Dendritic cell treated with granulocyte-macrophage colony-stimulating factor and Interleukin-4, amounts not matched to agents 40 ng/mL and 50 ng/mL, for 4 days (primary cell): ENCODE measurements at regions of chr14 and their contacts with region 1.

Region 1: DNA sequence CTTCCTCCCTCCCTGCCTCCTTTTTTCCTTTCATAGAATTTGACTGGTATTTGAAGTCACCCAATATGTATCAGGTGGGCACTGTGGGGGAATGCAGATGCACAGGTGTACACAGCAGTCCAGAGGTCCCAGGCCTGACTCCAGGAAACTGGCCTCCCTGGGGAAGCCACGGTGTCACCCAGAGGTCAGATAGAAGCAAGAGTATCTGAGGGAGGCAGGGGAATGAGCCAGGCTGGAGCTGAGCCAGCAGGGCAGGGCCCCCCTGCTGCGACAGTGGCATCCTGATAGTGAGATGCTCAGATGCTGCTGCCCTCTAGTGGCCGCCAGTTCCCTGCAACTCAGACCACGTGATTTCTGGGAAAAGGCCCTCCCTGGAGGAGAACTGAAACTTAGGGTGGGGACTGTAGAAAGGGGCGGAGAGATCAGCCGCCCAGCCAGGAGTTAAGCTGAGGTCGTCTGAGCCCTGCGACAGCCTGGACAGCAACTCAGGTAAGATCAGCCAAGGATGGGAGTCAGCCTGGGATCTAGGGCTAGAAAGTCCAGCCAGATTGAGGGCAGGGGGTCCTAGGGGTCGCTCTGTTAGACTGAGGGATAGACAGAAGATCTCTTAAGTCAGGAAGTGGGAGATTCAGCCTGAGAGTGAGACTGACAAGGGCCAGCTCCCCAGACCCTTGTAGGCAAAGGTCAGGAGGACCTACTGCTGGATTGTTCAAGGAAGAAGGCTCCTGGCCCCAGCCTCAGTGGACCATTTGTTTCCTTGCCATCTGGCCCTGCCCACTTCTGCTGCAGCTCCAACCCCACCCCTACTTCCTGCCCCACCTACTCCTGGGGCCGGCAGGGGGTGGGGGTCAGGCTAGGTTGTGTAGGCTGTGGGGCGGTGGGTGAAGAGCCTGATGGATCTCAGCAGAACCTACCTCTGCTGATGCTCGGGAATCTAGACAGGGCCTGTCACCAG is at the start of gene IRF9:
- H3K4me3 Mint-ChIP-seq: peak within 1 kb of the TSS; percentile 95
- H3K27ac Mint-ChIP-seq: peak within 1 kb of the TSS; percentile 93
- H3K4me1 Mint-ChIP-seq: peaks cover 66% of the 10 kb centered on the region
- H3K27me3 Mint-ChIP-seq: no peaks in the 10 kb centered on the region

Region 2: DNA sequence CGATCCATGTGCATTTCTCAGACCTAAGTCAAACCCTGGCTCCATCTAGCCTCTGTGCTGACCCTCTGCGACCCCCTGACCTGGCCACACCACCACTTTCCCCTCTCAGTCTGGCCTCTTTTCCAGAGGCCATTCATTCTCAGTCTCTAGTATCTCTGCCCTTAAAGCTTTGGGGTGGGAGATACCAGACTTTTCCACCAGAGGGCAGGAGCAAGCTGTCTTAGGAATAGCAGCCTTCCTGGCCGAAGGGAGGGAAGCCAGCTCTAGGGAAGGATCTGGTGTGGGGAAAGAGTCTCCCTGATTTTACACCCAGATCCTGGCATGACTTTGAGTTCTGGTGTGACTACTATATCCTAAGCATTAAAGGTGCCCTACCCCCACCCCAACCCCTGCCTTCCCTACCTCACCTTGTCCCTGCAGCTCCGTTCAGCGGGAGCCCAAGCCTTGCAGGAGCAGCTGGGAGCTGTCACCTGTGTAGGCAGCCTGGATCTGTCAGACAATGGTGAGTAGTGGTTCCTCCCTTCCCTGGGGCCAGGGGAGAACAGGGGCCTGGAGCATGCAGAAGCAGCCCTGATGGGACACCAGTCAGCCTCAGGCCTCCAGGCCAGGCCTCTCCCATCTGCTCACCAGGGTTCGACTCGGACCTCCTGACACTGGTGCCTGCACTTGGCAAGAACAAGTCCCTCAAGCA is 102.7 kb before region 1 on chr14:
- intact Hi-C with region 1: loop called (anchors 5 kb)
- H3K4me3 Mint-ChIP-seq: no peak overlapping the region
- H3K27ac Mint-ChIP-seq: no peak overlapping the region
- H3K4me1 Mint-ChIP-seq: peaks cover 5% of the 10 kb centered on the region
- H3K27me3 Mint-ChIP-seq: peaks cover 30% of the 10 kb centered on the region

Region 3: GRCh38 chr14:24093901-24094761 is 67.0 kb before region 1 on chr14 and contains the start of gene PCK2:
- intact Hi-C with region 1: loop called (anchors 1 kb)
- H3K4me3 Mint-ChIP-seq: peak within 1 kb of the TSS; percentile 90
- H3K27ac Mint-ChIP-seq: peak within 1 kb of the TSS; percentile 88
- H3K4me1 Mint-ChIP-seq: peaks cover 63% of the 10 kb centered on the region
- H3K27me3 Mint-ChIP-seq: no peaks in the 10 kb centered on the region

Region 4: DNA sequence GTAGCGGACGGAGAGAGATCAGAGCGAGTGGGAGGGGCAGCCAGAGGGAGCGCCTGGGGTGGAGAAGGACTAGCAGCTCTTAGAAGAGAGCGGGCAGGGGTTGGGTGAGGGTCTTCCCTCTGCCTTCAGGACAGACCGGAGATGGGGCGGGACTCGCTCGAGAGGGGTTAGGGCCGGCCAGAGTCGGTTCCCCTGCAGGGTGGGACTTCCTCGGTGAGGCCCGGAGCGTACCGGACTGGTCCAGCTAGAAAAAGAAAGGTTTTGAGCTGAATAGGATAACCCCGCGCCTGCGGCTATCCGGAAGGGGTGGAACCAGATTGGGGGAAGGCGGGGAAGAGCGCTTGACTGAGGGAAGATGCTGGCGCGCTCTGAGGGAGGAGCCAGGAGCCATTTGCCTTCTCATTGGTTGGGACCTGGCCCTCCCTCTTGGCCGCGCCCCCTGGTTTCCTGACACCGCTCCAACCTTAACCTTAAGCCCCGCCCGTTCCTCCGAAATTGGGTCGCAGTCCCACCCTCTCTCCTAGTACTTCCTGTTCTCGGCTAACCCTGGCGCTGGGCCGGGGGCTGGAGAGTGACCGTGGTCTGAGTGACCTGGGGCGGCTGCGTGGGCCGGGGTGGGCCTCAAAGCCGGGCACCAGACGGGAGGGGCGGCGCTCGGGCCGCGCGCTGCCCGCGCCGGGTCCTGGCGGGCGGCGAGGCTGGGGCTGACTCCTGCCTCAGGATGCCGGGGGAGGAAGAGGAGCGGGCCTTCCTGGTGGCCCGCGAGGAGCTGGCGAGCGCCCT is 14.0 kb before region 1 on chr14 and contains the start of gene RNF31:
- intact Hi-C with region 1: loop called (anchors 1 kb)
- H3K4me3 Mint-ChIP-seq: peak within 1 kb of the TSS; percentile 98
- H3K27ac Mint-ChIP-seq: peak within 1 kb of the TSS; percentile 91
- H3K4me1 Mint-ChIP-seq: peaks cover 59% of the 10 kb centered on the region
- H3K27me3 Mint-ChIP-seq: no peaks in the 10 kb centered on the region

Region 5: GRCh38 chr14:24195191-24196070 is 34.3 kb after region 1 on chr14 and contains the start of gene TM9SF1:
- intact Hi-C with region 1: loop called (anchors 5 kb)
- H3K4me3 Mint-ChIP-seq: peak within 1 kb of the TSS; percentile 94
- H3K27ac Mint-ChIP-seq: peak within 1 kb of the TSS; percentile 94
- H3K4me1 Mint-ChIP-seq: peaks cover 64% of the 10 kb centered on the region
- H3K27me3 Mint-ChIP-seq: no peaks in the 10 kb centered on the region